Activated CD4-positive, alpha-beta memory T cell treated with anti-CD3 and anti-CD28 coated beads for 36 hours (primary cell): ENCODE measurements at regions of chr17 and their contacts with region 1.

Region 1: DNA sequence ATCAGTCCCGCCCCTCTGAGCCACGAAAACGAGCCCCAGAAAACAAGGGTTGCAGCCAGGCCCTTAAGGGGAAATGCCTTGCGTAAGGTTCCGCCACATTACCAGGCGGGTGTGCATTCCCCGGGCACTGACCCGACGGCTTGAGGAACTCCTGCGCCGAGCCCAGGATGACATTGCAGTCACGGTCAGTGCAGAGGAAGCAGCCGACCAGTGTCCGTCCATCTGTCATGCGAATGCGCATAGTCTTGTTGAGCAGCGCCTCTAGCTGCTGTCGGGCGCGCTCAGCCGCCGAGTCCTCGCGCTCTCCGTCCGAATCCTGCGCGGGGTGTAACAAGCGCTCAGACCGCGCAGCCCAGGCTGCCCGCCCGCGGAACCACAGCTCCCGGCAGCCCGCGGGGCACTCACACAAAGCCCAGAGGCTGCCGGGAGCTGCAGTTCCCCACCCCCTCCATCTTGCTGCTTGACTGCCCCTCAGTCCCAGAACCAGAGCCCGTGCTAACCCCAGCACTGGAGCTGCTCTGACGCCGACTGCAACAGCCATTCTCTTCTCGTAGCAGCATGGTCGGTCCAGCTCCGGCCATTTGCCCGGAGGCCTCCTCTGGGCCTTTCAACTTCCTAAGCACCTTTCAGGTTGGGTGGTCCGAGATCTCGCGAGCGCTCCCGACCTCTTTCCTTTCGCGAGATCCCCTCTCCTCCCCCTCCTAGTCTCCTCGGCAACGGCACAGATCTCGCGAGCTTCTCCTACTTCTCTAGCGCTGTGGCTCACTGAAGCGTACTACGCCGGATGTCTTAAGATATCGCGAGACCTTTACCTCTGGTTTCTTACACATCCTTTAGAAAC is at the start of gene NAA38:
- DNase-seq: peak; percentile 97
- H3K4me3 Mint-ChIP-seq: no peak within 1 kb of the TSS
- H3K27ac Mint-ChIP-seq: no peak within 1 kb of the TSS
- H3K4me1 Mint-ChIP-seq: peaks cover 24% of the 10 kb centered on the region
- H3K27me3 Mint-ChIP-seq: no peaks in the 10 kb centered on the region
- total RNA-seq, gene NAA38: 68.2 to 74.7 TPM

Region 2: GRCh38 chr17:7745748-7746470 is 111.2 kb before region 1 on chr17:
- CTCF ChIA-PET with region 1: no interaction called
- POLR2A ChIA-PET with region 1: no interaction called
- intact Hi-C with region 1: loop called (anchors 10 kb)
- DNase-seq: no peak
- H3K4me3 Mint-ChIP-seq: no peak overlapping the region
- H3K27ac Mint-ChIP-seq: no peak overlapping the region
- H3K4me1 Mint-ChIP-seq: no peaks in the 10 kb centered on the region
- H3K27me3 Mint-ChIP-seq: peaks cover 3% of the 10 kb centered on the region

Region 3: DNA sequence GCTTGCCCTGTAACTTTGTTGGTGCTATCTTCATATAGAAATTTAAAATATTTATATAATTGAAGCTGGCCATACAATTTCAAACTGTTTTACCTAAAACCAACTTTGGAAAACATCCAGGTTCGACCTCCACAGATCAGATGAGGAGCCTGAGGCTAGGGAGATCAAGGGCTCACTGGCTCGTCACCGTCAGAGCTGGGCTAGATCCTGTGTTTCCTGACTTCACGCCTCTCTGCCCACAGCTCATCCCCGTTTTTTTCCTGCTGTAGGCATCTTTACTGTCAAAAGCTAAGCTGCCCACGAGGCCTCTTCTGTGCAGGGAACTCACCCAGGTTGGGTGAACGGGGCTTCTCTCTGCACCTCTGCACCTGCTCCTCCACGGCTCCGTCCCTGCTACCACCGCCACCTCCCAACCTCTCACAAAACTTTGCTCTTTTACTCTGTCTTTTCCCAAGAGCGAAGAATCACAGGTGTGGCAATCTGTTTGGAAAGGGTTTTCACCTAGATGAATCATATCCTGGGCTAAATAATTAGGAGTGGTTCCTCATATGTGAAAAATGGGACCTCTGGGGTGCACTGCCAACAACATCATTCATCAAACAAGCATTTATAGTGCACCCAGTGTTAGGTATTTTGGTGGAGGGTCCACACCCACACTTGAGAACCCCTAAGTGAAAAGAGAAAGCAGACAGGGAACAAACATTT is 47.9 kb before region 1 on chr17:
- CTCF ChIA-PET with region 1: no interaction called
- POLR2A ChIA-PET with region 1: no interaction called
- intact Hi-C with region 1: no loop called
- DNase-seq: no peak
- H3K4me3 Mint-ChIP-seq: no peak overlapping the region
- H3K27ac Mint-ChIP-seq: no peak overlapping the region
- H3K4me1 Mint-ChIP-seq: no peaks in the 10 kb centered on the region
- H3K27me3 Mint-ChIP-seq: peaks cover 10% of the 10 kb centered on the region

Region 4: DNA sequence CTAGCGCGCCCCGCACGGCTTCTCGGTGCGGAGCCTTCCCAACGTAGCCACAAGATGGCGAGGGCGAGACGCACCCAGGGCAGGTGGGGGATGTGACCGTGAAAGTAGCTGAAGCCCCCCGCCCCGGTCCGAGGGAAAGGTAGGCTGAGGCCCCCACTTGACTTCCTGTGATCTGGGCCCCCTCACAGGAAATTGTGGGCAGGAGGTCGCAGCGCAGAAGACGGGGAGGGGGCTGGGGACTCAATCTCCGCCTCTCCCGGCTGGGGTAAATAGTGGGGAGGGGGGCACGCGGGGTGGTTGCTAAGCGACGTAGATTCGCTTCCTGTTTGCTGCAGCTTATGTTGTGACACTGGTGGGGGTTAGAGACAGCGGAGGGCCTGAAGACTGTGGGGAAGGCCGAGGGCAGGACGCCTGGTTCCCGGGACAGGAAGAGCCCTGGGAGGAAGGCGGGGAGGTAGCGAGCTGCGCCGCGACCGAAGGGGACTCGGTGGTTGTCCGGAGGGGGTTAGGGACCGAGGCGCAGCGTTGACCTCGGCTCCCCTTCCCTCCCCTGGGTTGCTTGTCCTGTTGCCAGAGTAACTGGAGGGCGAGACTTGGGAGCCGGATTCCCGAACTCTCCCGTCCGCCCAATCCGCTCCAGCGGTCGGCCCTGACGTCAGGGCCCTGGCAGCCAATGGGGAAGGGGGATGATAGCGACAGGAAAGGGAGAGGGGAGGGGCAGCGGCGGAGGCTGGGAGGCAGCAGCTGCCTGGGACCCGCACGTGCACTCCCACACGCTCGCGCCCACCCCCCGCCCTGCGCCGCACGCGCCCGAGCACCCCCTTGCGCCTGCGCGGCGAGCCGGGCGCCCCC is 21.9 kb before region 1 on chr17:
- CTCF ChIA-PET with region 1: interaction called, 32 read pairs
- POLR2A ChIA-PET with region 1: interaction called, 18 read pairs
- intact Hi-C with region 1: loop called (anchors 1 kb)
- DNase-seq: peak; percentile 95
- H3K4me3 Mint-ChIP-seq: peak overlapping the region; percentile 90
- H3K27ac Mint-ChIP-seq: peak overlapping the region; percentile 95
- H3K4me1 Mint-ChIP-seq: peaks cover 43% of the 10 kb centered on the region
- H3K27me3 Mint-ChIP-seq: no peaks in the 10 kb centered on the region

Region 5: GRCh38 chr17:7844292-7845154 is 12.6 kb before region 1 on chr17:
- CTCF ChIA-PET with region 1: interaction called, 11 read pairs
- POLR2A ChIA-PET with region 1: interaction called, 20 read pairs
- intact Hi-C with region 1: loop called (anchors 1 kb)
- DNase-seq: peak; percentile 92
- H3K4me3 Mint-ChIP-seq: peak overlapping the region; percentile 85
- H3K27ac Mint-ChIP-seq: peak overlapping the region; percentile 95
- H3K4me1 Mint-ChIP-seq: peaks cover 45% of the 10 kb centered on the region
- H3K27me3 Mint-ChIP-seq: no peaks in the 10 kb centered on the region

Region 6: DNA sequence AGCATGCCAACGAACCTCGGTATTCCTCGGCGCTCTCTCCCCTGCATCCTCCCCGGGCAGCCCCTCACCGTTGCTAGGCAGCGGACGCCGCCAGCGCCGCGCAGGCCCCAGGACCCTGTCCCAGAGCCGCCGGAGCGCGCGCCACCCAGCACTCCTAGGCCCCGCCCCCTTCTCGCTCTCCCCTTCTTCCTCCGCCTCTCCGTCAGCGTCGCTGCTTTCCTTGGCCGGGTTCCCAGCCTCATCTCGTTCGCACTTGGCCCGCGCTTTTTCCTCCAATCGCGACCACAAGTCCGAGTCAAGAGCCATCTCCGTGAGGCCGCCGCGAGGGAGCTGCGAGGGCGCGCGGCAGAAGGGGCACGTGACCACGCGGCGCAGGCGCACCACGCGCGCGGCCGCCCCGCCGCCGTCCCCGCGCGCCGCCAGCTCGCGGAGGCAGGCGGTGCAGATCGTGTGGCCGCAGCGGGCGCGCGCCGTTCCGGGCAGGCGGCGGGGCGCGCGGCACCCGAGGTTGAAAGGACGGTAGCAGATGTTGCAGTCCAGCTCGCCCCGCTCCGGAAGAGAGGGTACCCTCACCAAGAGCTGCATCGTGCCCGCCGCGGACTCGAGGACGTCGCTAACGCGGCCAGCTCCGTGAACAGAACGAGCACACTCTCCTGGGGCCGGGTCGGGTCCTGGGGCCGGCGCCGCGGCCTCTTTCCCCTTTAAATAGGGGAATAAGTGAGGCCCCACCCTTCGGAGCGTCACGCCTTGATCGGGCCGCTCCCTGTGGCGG is 58.7 kb after region 1 on chr17 and contains the start of gene RNF227:
- CTCF ChIA-PET with region 1: interaction called, 9 read pairs
- POLR2A ChIA-PET with region 1: interaction called, 4 read pairs
- intact Hi-C with region 1: loop called (anchors 2 kb)
- DNase-seq: peak; percentile 92
- H3K4me3 Mint-ChIP-seq: peak within 1 kb of the TSS; percentile 85
- H3K27ac Mint-ChIP-seq: peak within 1 kb of the TSS; percentile 86
- H3K4me1 Mint-ChIP-seq: peaks cover 29% of the 10 kb centered on the region
- H3K27me3 Mint-ChIP-seq: no peaks in the 10 kb centered on the region
- total RNA-seq, gene RNF227: 2.7 to 3.3 TPM